ENCODE measurements at regions of chr19 and their contacts with region 1.

Region 1: GRCh38 chr19:55653758-55654539 is 886 bp upstream of the U2AF2 start:
- DNase-seq: peak; percentile 100
- H3K4me3 ChIP-seq: peak overlapping the region; percentile 86 to 87
- H3K4me3 Mint-ChIP-seq: peak overlapping the region; percentile 92 to 99 (median 94)
- H3K27ac ChIP-seq: peak overlapping the region; percentile 99
- H3K27ac Mint-ChIP-seq: peak overlapping the region; percentile 96 to 100 (median 98)
- H3K4me1 ChIP-seq: peaks cover 42% of the 10 kb centered on the region
- H3K4me1 Mint-ChIP-seq: peaks cover 19 to 58% (median 32%) of the 10 kb centered on the region in 4 donors
- H3K27me3 ChIP-seq: no peaks in the 10 kb centered on the region
- H3K27me3 Mint-ChIP-seq: no peaks in the 10 kb centered on the region

Region 2: GRCh38 chr19:54189735-54190502 is 1464.0 kb before region 1 on chr19:
- CTCF ChIA-PET with region 1: no interaction called
- POLR2A ChIA-PET with region 1: interaction called, 7 read pairs
- intact Hi-C with region 1: loop called (anchors 1 kb)
- DNase-seq: peak; percentile 100
- H3K4me3 ChIP-seq: peak overlapping the region; percentile 57 to 76
- H3K4me3 Mint-ChIP-seq: peak overlapping the region; percentile 90 to 99 (median 96)
- H3K27ac ChIP-seq: peak overlapping the region; percentile 99
- H3K27ac Mint-ChIP-seq: peak overlapping the region; percentile 94 to 100 (median 99)
- H3K4me1 ChIP-seq: peaks cover 30% of the 10 kb centered on the region
- H3K4me1 Mint-ChIP-seq: peaks cover 15 to 54% (median 32%) of the 10 kb centered on the region in 4 donors
- H3K27me3 ChIP-seq: no peaks in the 10 kb centered on the region
- H3K27me3 Mint-ChIP-seq: no peaks in the 10 kb centered on the region

Region 3: DNA sequence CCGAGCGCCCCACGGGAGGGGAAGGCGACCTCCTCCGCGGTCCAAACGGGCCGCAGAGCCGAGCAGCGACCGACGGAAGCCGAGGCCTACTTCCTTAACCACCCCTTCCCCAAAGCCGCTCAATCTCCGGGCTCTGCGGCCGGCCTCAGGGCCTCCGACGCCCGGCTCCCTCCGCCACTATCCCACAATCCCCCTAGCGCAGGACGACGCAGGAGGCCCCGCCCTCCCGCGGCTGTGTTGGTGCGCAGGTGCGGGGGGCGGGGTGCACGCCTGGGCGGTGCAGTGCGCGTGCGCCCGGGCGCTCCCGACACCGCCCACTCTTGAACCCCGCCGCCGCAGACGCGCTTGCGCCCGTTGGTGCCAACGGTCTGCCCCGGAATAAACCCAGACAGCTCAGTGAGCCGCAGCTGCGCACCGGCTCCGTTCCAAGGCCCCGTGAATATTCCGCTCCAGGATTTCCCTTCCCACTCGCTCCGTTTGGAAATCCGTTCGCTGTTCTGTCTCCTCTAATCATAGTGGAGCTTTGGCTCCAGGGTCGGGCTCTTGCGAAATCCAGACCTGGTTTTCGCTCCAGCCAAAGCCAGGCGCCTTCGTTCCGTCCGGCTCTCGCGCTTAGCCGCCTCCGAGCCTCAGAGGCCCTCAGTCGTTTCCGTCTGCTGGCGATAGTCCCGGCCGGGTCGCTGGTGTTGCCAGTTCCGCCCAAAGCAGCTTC is 395.0 kb before region 1 on chr19 and contains the start of gene PPP6R1:
- CTCF ChIA-PET with region 1: no interaction called
- POLR2A ChIA-PET with region 1: interaction called, 9 read pairs
- intact Hi-C with region 1: loop called (anchors 1 kb)
- DNase-seq: peak; percentile 94 to 98 (median 96)
- H3K4me3 ChIP-seq: peak within 1 kb of the TSS; percentile 79 to 92
- H3K4me3 Mint-ChIP-seq: peak within 1 kb of the TSS; percentile 93 to 100 (median 98)
- H3K27ac ChIP-seq: peak within 1 kb of the TSS; percentile 92
- H3K27ac Mint-ChIP-seq: peak within 1 kb of the TSS; percentile 97 to 100 (median 99)
- H3K4me1 ChIP-seq: peaks cover 44% of the 10 kb centered on the region
- H3K4me1 Mint-ChIP-seq: peaks cover 23 to 50% (median 38%) of the 10 kb centered on the region in 4 donors
- H3K27me3 ChIP-seq: no peaks in the 10 kb centered on the region
- H3K27me3 Mint-ChIP-seq: peaks cover 0 to 2% of the 10 kb centered on the region in 2 donors
- total RNA-seq, gene PPP6R1: 161 to 162 TPM

Region 4: GRCh38 chr19:55385740-55386529 is 268.0 kb before region 1 on chr19 and contains the start of gene RPL28:
- CTCF ChIA-PET with region 1: no interaction called
- POLR2A ChIA-PET with region 1: interaction called, 11 read pairs
- intact Hi-C with region 1: no loop called
- DNase-seq: peak; percentile 98 to 100 (median 99)
- H3K4me3 ChIP-seq: peak within 1 kb of the TSS; percentile 85 to 88
- H3K4me3 Mint-ChIP-seq: peak within 1 kb of the TSS; percentile 99 to 100 (median 100)
- H3K27ac ChIP-seq: peak within 1 kb of the TSS; percentile 94
- H3K27ac Mint-ChIP-seq: peak within 1 kb of the TSS; percentile 98 to 100 (median 99)
- H3K4me1 ChIP-seq: peaks cover 68% of the 10 kb centered on the region
- H3K4me1 Mint-ChIP-seq: peaks cover 39 to 88% (median 63%) of the 10 kb centered on the region in 4 donors
- H3K27me3 ChIP-seq: no peaks in the 10 kb centered on the region
- H3K27me3 Mint-ChIP-seq: no peaks in the 10 kb centered on the region
- total RNA-seq, gene RPL28: 3,136 to 3,159 TPM

Region 5: GRCh38 chr19:55579766-55580621 is 74.0 kb before region 1 on chr19:
- CTCF ChIA-PET with region 1: no interaction called
- POLR2A ChIA-PET with region 1: no interaction called
- intact Hi-C with region 1: no loop called
- DNase-seq: no peak
- H3K4me3 ChIP-seq: peak overlapping the region; percentile 17 to 61
- H3K4me3 Mint-ChIP-seq: peak overlapping the region; percentile 81 to 97 (median 88)
- H3K27ac ChIP-seq: peak overlapping the region; percentile 69
- H3K27ac Mint-ChIP-seq: peak overlapping the region; percentile 83 to 95 (median 93)
- H3K4me1 ChIP-seq: peaks cover 20% of the 10 kb centered on the region
- H3K4me1 Mint-ChIP-seq: peaks cover 18 to 31% (median 20%) of the 10 kb centered on the region in 4 donors
- H3K27me3 ChIP-seq: no peaks in the 10 kb centered on the region
- H3K27me3 Mint-ChIP-seq: peaks cover 0 to 1% of the 10 kb centered on the region in 2 donors

Region 6: GRCh38 chr19:55605207-55605636 is 48.7 kb before region 1 on chr19:
- CTCF ChIA-PET with region 1: interaction called, 8 read pairs
- POLR2A ChIA-PET with region 1: interaction called, 30 read pairs
- intact Hi-C with region 1: loop called (anchors 1 kb)
- DNase-seq: peak; percentile 95 to 98 (median 97)
- H3K4me3 ChIP-seq: peak overlapping the region; percentile 43 to 83
- H3K4me3 Mint-ChIP-seq: peak overlapping the region; percentile 79 to 93 (median 84)
- H3K27ac ChIP-seq: peak overlapping the region; percentile 88
- H3K27ac Mint-ChIP-seq: peak overlapping the region; percentile 83 to 97 (median 94)
- H3K4me1 ChIP-seq: peaks cover 42% of the 10 kb centered on the region
- H3K4me1 Mint-ChIP-seq: peaks cover 41 to 73% (median 48%) of the 10 kb centered on the region in 4 donors
- H3K27me3 ChIP-seq: no peaks in the 10 kb centered on the region
- H3K27me3 Mint-ChIP-seq: no peaks in the 10 kb centered on the region

Region 7: GRCh38 chr19:55643348-55644176 is 10.4 kb before region 1 on chr19 and contains the start of gene ZNF581:
- CTCF ChIA-PET with region 1: interaction called, 6 read pairs
- POLR2A ChIA-PET with region 1: interaction called, 91 read pairs
- intact Hi-C with region 1: loop called (anchors 1 kb)
- DNase-seq: peak; percentile 77 to 85 (median 79)
- H3K4me3 ChIP-seq: peak within 1 kb of the TSS; percentile 53 to 83
- H3K4me3 Mint-ChIP-seq: peak within 1 kb of the TSS; percentile 86 to 96 (median 92)
- H3K27ac ChIP-seq: peak within 1 kb of the TSS; percentile 69
- H3K27ac Mint-ChIP-seq: peak within 1 kb of the TSS; percentile 87 to 99 (median 94)
- H3K4me1 ChIP-seq: peaks cover 49% of the 10 kb centered on the region
- H3K4me1 Mint-ChIP-seq: peaks cover 29 to 62% (median 45%) of the 10 kb centered on the region in 4 donors
- H3K27me3 ChIP-seq: no peaks in the 10 kb centered on the region
- H3K27me3 Mint-ChIP-seq: no peaks in the 10 kb centered on the region
- total RNA-seq, gene ZNF581: 21.2 to 23.4 TPM

Region 8: DNA sequence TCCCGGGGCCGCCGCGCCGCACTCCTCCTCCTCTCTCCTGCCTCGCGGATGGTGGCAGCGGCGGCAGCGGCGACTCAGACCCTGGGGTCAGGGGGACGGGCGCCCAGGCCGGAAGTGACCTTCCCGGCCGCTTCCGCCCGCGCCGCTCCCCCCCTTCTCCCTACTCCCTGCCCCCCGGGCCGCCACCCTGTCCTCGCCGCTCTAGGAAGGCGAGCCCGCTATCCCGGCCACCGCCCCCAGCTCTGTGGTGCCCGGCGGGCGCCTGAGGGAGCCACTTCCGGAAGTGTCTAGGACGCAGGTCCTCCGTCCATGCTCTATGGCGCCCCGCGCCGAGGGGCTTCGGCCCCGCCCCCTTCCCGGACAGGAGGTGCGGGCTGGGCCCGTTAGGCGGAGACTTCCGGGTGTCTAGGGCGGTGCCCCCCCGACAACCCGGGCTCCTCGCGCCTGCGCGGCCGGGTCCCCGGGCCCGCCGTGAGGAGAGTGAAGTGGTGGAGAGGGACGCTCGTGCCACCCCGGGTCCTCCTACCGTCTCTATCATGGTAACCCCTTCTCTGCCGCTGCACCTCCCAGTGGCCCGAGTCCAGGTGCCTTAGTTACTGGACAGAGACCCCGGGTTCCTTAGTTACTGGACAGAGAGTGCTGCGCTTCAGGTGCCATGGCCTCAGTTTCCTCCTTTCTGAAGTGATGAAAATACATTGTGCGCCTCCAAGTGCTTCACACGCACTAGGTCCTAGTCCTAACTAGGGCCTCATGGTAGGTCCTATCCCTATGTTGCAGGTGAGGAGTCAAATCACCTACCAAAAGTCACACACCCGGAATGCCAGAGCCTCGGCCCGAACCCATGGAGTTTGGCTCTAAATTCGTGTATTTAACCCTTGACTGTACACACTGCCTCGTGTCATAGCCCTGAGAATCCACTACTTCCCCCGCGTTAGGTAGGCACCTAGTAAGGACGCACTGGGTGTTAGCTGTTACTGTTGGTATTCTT is 467.5 kb after region 1 on chr19 and contains the start of gene ZNF787:
- CTCF ChIA-PET with region 1: no interaction called
- POLR2A ChIA-PET with region 1: no interaction called
- intact Hi-C with region 1: loop called (anchors 1 kb)
- DNase-seq: peak; percentile 95 to 98 (median 98)
- H3K4me3 ChIP-seq: peak within 1 kb of the TSS; percentile 60 to 67
- H3K4me3 Mint-ChIP-seq: peak within 1 kb of the TSS; percentile 86 to 97 (median 88)
- H3K27ac ChIP-seq: peak within 1 kb of the TSS; percentile 92
- H3K27ac Mint-ChIP-seq: peak within 1 kb of the TSS; percentile 89 to 97 (median 96)
- H3K4me1 ChIP-seq: peaks cover 19% of the 10 kb centered on the region
- H3K4me1 Mint-ChIP-seq: peaks cover 21 to 49% (median 37%) of the 10 kb centered on the region in 4 donors
- H3K27me3 ChIP-seq: no peaks in the 10 kb centered on the region
- H3K27me3 Mint-ChIP-seq: no peaks in the 10 kb centered on the region
- total RNA-seq, gene ZNF787: 29.6 to 34.1 TPM